ENCODE measurements at regions of chr20 and their contacts with region 1.

Region 1: GRCh38 chr20:54533081-54533480 is 57.7 kb downstream of the DOK5 start:
- DNase-seq: no peak
- H3K4me3 ChIP-seq: no peak overlapping the region
- H3K27ac ChIP-seq: no peak overlapping the region
- H3K4me1 ChIP-seq: no peaks in the 10 kb centered on the region
- H3K27me3 ChIP-seq: no peaks in the 10 kb centered on the region
- CTCF ChIP-seq: no peak

Region 2: GRCh38 chr20:54382422-54382821 is 150.7 kb before region 1 on chr20:
- CTCF ChIA-PET with region 1: no interaction called
- dilution Hi-C with region 1: no loop called
- in situ Hi-C with region 1: no loop called
- intact Hi-C with region 1: no loop called
- DNase-seq: no peak
- H3K4me3 ChIP-seq: no peak overlapping the region
- H3K27ac ChIP-seq: no peak overlapping the region
- H3K4me1 ChIP-seq: no peaks in the 10 kb centered on the region
- H3K27me3 ChIP-seq: no peaks in the 10 kb centered on the region
- CTCF ChIP-seq: no peak

Region 3: DNA sequence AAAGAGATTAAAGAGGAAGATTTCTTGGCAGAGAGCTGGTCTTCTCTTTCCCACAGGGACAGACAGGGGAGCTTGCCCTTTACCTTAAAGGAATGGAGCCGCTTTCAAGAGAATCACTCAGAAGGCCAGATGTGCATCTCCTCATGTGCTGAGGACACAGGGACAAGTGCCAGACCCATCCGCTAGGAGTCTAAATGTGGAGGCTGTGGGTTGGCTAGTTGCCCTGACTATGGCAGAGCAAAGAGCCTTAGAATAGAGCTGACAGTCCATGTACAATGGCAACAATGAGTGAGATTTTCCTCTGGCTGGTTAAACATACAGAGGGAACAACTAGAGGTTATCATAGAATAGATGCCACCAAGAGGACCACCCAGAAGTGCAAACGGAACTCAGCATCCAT is 65.0 kb before region 1 on chr20:
- CTCF ChIA-PET with region 1: no interaction called
- dilution Hi-C with region 1: loop called (anchors 5 kb)
- in situ Hi-C with region 1: no loop called
- intact Hi-C with region 1: no loop called
- DNase-seq: no peak
- H3K4me3 ChIP-seq: no peak overlapping the region
- H3K27ac ChIP-seq: no peak overlapping the region
- H3K4me1 ChIP-seq: no peaks in the 10 kb centered on the region
- H3K27me3 ChIP-seq: no peaks in the 10 kb centered on the region
- CTCF ChIP-seq: no peak

Region 4: GRCh38 chr20:54515862-54516628 is 17.0 kb before region 1 on chr20:
- CTCF ChIA-PET with region 1: no interaction called
- dilution Hi-C with region 1: no loop called
- in situ Hi-C with region 1: no loop called
- intact Hi-C with region 1: no loop called
- DNase-seq: no peak
- H3K4me3 ChIP-seq: no peak overlapping the region
- H3K27ac ChIP-seq: no peak overlapping the region
- H3K4me1 ChIP-seq: no peaks in the 10 kb centered on the region
- H3K27me3 ChIP-seq: no peaks in the 10 kb centered on the region
- CTCF ChIP-seq: no peak

Measured in mammary epithelial cell (primary cell).